Heart left ventricle (tissue), 16 donors: ENCODE measurements at regions of chr20 and their contacts with region 1.

Region 1: DNA sequence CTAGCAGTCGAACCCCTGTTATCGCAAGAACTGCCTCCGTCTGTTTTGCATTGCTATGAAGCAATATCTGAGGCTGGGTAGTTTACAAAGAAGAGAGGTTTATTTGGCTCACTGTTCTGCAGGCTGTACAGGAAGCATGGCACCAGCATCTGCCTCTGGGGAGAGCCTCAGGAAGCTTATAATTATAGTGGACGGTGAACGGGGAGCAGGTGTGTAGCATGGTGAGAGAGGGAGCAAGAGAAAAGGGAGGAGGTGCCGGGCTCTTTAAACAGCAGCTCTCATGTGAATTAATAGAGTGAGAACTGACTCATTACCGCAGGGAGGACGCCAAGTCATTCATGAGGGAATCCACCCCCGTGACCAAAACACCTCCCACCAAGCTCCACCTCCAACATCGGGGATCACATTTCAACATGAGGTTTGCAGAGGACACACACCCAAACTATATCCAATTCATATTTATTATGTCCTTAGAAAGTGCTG is 172.6 kb upstream of the KCNG1 start:
- DNase-seq: no peak
- ATAC-seq: no peak
- H3K4me3 ChIP-seq: no peak overlapping the region
- H3K27ac ChIP-seq: no peak overlapping the region
- H3K4me1 ChIP-seq: no peaks in the 10 kb centered on the region
- H3K27me3 ChIP-seq: peaks cover 0 to 41% (median 4%) of the 10 kb centered on the region in 9 donors
- CTCF ChIP-seq: no peak
- POLR2A ChIP-seq: no peak

Region 2: DNA sequence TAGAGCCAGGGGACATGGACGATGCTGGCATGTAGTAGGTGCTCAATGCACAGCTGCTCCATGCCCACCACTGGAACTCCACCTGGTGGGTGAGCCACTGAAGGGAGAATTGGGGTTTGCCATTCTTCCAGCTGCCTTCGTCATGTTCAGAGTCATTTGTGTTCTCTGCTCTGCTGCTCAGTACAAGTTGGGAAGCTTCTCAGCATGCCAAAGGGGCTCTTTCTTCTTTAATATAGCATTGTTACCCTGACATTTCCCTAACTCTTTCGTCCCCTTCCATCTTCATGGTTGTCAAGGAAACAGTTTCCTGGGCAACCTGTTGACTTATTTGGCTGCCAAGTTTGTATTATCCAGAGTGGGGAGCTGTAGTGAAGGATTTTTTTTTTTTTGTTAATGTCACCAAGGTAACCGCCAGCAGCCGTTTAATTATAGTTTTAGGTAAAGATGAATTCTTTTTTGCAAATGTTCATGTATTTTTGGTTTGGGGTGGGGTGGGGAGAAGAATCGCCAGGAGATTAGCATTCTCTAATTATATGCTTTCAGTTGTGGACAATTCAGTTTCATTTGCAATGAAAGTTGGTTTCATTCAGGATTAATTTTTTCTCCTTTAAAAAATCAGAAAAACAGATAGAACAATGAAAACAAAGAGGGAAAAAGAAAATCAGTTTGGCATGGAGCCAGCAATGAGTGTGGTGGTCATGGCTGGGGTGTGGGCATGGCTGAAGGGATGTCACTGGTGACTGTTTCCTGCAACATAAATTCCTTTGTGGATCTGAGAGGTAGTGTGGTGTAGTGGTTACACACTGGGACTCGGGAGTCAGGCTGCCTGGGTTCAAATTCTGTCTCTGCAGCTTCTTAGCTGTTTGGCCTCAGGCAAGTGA is 99.6 kb before region 1 on chr20:
- intact Hi-C with region 1: no loop called
- DNase-seq: no peak
- ATAC-seq: no peak
- H3K4me3 ChIP-seq: no peak overlapping the region
- H3K27ac ChIP-seq: no peak overlapping the region
- H3K4me1 ChIP-seq: no peaks in the 10 kb centered on the region
- H3K27me3 ChIP-seq: peaks cover 0 to 62% (median 26%) of the 10 kb centered on the region in 9 donors
- CTCF ChIP-seq: no peak
- POLR2A ChIP-seq: no peak

Region 3: GRCh38 chr20:51258582-51259180 is 63.2 kb after region 1 on chr20:
- intact Hi-C with region 1: loop called in 1 of 10 experiments (anchors 10 kb)
- DNase-seq: no peak
- ATAC-seq: no peak
- H3K4me3 ChIP-seq: no peak overlapping the region
- H3K27ac ChIP-seq: no peak overlapping the region
- H3K4me1 ChIP-seq: no peaks in the 10 kb centered on the region
- H3K27me3 ChIP-seq: peaks cover 0 to 40% (median 0%) of the 10 kb centered on the region in 9 donors
- CTCF ChIP-seq: no peak
- POLR2A ChIP-seq: no peak

Region 4: GRCh38 chr20:51767010-51767558 is 571.6 kb after region 1 on chr20:
- intact Hi-C with region 1: no loop called
- DNase-seq: peak; percentile 53 to 85 (median 74)
- ATAC-seq: peak; percentile 69 to 96 (median 94)
- H3K4me3 ChIP-seq: peak overlapping the region; percentile 52 to 96 (median 90)
- H3K27ac ChIP-seq: peak overlapping the region in 6 of 12 donors; percentile 40 to 82 (median 66)
- H3K4me1 ChIP-seq: peaks cover 0 to 17% (median 0%) of the 10 kb centered on the region in 12 donors
- H3K27me3 ChIP-seq: peaks cover 0 to 19% (median 0%) of the 10 kb centered on the region in 9 donors
- CTCF ChIP-seq: no peak
- POLR2A ChIP-seq: no peak